Right ventricle myocardium inferior (tissue), 1 donor: ENCODE measurements at regions of chr11 and their contacts with region 1.

Region 1: DNA sequence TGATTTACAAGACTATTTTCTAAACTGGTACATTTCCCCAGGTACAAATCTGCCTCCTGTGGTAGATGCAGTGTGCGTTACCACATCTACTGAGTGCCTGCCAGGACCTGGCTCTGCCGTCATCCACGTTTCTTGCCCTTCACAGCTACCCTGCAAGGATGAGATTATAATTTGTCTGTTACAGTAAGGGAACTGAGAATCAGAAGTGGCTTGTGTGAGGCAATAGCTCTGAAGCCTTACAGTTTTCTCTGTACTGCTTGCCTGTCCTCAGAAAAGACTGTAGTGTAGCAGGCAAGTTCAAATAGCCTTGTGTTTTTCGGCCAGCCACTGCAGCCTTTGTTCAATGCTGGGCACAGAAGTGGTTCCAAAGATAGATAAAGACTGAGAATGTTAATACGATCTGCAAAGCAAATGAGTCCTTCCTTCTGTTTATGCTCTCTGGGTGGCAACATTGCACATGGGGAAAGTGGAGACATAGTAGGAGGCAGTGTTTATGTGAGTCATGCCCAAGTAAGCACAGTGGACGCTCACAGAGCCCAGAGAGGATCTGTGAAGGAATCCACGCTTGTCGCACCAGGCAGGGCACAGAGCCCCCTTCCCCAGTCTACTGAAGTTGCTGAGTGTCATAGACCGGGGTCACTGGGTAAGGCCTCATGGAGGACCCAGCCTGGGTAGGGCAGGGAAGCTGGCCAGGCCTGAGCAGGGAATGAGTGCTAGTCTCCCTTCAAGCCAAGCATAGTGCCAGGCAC is 49.1 kb downstream of the MICAL2 start:
- DNase-seq: no peak
- ATAC-seq: peak; percentile 34

Region 2: GRCh38 chr11:11948242-11948947 is 211.1 kb before region 1 on chr11:
- intact Hi-C with region 1: no loop called
- DNase-seq: no peak
- ATAC-seq: no peak

Region 3: GRCh38 chr11:12008790-12009616 is 150.5 kb before region 1 on chr11:
- intact Hi-C with region 1: no loop called
- DNase-seq: no peak
- ATAC-seq: peak; percentile 81

Region 4: DNA sequence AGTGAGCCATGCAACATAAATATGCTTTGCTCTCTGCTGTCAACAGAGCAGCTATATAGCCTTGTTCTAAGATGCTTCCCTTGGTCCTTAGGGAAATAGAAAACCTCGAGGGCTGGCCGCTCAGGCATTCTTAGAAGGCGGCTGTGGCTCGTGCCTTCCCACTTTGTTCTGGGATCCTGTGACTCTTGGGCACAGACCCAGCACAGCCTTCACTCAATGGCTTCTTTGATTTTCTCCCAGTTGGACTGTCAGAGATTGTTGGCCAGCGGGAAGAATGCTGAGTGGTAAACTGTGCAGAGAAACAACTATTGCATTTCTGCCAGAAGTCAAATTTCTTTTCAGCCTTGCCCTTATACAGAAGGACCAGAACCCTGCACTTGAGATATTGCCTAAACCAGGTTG is 58.7 kb before region 1 on chr11:
- intact Hi-C with region 1: loop called (anchors 5 kb)
- DNase-seq: no peak
- ATAC-seq: peak; percentile 79

Region 5: GRCh38 chr11:12110201-12110713 is 49.3 kb before region 1 on chr11 and contains the start of gene MICAL2:
- intact Hi-C with region 1: loop called (anchors 2 kb)
- DNase-seq: peak; percentile 95
- ATAC-seq: peak; percentile 98
- total RNA-seq, gene MICAL2: 42.0 TPM

Region 6: GRCh38 chr11:12126344-12127019 is 33.0 kb before region 1 on chr11:
- intact Hi-C with region 1: no loop called
- DNase-seq: no peak
- ATAC-seq: no peak

Region 7: DNA sequence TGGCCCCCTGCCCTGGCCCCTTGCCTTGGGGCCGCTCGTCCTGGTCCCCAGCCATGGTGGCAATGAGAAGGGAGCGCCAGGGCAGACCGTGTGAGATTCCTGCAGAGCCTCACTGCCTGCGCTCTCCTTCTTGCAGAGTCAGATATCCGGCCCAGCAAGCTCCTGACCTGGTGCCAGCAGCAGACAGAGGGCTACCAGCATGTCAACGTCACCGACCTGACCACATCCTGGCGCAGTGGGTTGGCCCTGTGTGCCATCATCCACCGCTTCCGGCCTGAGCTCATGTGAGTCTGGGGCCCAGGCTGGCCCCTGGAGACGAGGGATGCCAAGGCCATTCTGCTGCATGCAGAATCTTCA is 65.0 kb after region 1 on chr11:
- intact Hi-C with region 1: loop called (anchors 2 kb)
- DNase-seq: peak; percentile 92
- ATAC-seq: peak; percentile 11

Region 8: DNA sequence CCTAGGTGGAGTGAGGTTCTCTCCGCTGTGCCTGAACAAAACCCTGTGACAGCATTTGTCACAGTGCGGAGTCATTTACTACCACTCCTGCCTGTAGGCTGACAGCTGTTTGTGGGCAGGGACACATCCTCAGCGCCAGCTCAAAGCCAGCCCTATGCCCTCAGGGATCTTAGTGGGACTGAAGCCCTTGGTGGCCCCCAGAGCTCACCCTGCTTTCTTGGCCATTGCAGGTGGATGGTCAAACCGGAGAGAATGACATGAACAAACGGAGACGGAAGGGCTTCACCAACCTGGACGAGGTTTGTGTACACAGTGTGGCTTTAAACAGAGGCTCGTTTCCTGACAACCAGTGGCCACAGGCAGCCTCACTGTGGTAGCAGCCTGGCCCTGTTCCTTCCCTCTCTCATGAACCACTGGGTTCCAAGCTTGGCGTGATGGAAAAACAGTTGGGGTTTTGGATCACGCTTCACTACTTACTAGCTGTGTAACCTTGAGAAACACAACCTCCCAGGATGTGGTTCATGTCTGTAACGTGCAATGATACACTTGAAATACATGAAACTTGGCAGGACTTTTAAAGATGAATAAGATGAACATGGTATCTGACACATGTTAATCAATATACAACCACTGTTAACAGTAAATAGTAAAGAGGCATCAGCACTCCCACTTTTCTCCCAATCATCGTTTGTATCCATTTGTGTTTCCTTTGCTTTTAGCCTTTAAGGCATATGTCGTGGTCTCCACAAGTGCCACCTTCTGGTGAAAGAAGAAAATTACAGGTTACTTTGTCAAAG is 76.6 kb after region 1 on chr11:
- intact Hi-C with region 1: loop called (anchors 5 kb)
- DNase-seq: no peak
- ATAC-seq: no peak

Region 9: DNA sequence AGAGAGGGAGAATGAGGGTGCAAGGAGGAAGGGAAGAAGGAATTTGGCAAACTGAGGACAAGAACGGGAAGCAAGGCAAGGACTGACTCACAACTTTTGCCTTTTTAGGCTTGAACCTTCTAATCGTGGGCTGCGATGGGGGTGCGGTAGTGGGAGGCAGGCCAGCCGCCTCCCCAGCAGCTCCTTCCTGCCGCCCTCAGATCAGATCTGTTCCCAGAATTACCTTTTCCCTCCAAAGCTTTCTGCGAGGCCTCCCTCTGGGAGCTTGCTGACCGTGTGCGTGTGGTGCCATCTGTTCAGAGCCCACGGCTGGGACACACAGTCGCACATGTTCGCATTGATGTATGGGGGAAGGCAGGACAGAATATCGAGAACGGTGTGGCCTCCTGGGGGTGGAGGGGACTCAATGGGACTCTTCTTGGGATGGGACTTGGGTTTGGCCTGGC is 131.0 kb after region 1 on chr11:
- intact Hi-C with region 1: no loop called
- DNase-seq: no peak
- ATAC-seq: no peak